B cell (primary cell): ENCODE measurements at regions of chr1 and their contacts with region 1.

Region 1: DNA sequence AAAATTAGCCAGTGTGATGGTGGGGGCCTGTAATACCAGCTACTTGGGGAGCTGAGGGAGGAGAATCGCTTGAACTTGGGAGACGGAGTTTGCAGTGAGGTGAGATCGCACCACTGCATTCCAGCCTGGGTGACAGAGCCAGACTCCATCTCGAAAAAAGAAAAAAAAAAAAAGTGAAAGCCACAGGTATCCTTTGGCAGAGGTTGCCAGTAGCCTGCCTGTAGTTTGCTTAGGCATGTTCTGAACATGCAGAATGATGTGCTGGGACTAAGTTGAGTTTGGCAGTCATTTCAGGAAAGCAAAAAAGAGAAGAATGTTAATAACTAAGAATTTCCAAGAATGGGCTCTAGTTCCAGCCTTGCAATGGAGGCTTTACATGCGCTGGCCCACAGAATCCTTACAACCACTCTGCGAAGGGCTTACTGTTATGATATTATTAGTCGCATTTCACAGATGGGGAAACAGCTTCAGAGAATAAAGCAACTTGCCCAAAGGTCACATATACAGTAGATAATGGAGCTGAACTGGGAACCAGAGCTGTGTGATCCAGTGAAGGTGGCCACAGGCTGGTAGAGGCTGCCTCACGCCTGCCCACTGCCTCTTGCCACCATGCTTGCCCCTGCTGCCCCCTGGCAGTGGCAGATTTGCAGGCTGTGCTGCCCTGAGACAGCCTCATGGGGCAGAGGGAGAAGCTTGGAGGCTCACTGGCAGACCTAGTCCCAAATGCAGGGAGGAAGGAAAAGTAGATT is 66.5 kb upstream of the LYST start:
- DNase-seq: peak; percentile 33
- ATAC-seq: no peak
- H3K4me3 ChIP-seq: no peak overlapping the region
- H3K4me3 Mint-ChIP-seq: peak overlapping the region; percentile 1
- H3K27ac ChIP-seq: peak overlapping the region; percentile 26 to 75
- H3K27ac Mint-ChIP-seq: peak overlapping the region; percentile 85
- H3K4me1 ChIP-seq: peaks cover 93 to 95% of the 10 kb centered on the region in 2 donors
- H3K4me1 Mint-ChIP-seq: peaks cover 80% of the 10 kb centered on the region
- H3K27me3 ChIP-seq: no peaks in the 10 kb centered on the region
- H3K27me3 Mint-ChIP-seq: no peaks in the 10 kb centered on the region
- CTCF ChIP-seq: no peak

Region 2: DNA sequence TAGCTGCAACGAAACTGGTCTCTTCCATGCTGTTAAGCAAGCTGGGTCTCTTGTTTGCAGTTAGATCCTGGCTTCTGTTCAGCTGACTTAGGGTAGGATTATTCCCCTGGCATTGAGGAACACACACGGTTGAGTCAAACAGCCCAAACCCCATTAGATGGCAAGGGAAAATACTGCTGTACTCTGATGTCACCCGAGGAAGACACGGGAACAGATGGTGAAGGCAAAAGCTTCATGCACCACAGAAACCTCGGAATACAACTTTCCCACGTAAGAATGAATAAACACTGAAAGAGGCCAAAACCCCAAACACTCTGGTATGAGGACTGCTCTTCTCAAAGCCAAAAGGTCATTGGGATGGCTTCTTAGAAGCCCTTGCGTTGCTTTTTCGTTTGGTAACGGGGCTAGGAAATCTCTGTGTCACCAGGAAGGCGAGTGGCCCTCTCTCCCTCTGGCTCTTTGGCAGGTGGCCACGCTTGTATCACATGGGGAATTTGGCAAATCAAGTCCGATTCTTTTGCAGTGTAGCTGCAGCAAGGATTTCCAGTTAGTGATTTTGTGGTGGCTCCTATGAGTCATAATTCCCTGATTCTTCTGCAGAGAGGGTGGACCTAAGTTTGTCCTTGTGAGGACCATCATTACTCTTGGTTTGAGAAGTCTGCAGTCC is 49.8 kb before region 1 on chr1:
- CTCF ChIA-PET with region 1: no interaction called
- POLR2A ChIA-PET with region 1: interaction called, 3 read pairs
- intact Hi-C with region 1: loop called (anchors 5 kb)
- DNase-seq: no peak
- ATAC-seq: no peak
- H3K4me3 ChIP-seq: no peak overlapping the region
- H3K4me3 Mint-ChIP-seq: no peak overlapping the region
- H3K27ac ChIP-seq: no peak overlapping the region
- H3K27ac Mint-ChIP-seq: peak overlapping the region; percentile 22
- H3K4me1 ChIP-seq: peaks cover 29 to 43% of the 10 kb centered on the region in 2 donors
- H3K4me1 Mint-ChIP-seq: peaks cover 58% of the 10 kb centered on the region
- H3K27me3 ChIP-seq: no peaks in the 10 kb centered on the region
- H3K27me3 Mint-ChIP-seq: no peaks in the 10 kb centered on the region
- CTCF ChIP-seq: no peak

Region 3: DNA sequence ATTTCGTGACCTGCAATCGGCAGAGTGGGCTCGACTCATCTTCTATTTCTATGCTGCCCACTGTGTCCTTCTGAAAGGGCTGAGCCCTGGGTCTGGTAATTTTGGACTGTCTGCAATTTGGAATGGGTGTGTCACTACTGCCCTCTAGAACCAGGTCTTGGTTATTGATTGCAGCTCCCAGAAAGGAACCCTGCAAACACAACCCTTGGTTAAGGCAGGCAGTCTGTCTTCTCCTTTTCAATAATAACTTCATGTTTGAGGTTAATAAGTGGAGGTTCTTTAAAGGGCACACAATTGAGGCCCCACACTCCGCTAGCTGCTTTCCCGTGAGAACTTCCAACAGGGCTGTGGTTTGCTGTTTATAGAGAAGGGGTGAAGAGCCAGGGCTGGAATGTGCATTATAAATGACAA is 13.4 kb after region 1 on chr1:
- CTCF ChIA-PET with region 1: interaction called, 18 read pairs
- POLR2A ChIA-PET with region 1: interaction called, 5 read pairs
- intact Hi-C with region 1: loop called (anchors 1 kb)
- DNase-seq: no peak
- ATAC-seq: peak; percentile 61
- H3K4me3 ChIP-seq: peak overlapping the region in 1 of 5 experiments; percentile 34
- H3K4me3 Mint-ChIP-seq: peak overlapping the region; percentile 64
- H3K27ac ChIP-seq: peak overlapping the region; percentile 9 to 68
- H3K27ac Mint-ChIP-seq: peak overlapping the region; percentile 79
- H3K4me1 ChIP-seq: peaks cover 78 to 88% of the 10 kb centered on the region in 2 donors
- H3K4me1 Mint-ChIP-seq: peaks cover 81% of the 10 kb centered on the region
- H3K27me3 ChIP-seq: no peaks in the 10 kb centered on the region
- H3K27me3 Mint-ChIP-seq: no peaks in the 10 kb centered on the region
- CTCF ChIP-seq: no peak